HEK293T (cell line): ENCODE measurements at regions of chr4 and their contacts with region 1.

Region 1: GRCh38 chr4:147683717-147684700 is at the start of gene PRMT9:
- DNase-seq: peak; percentile 93

Region 2: GRCh38 chr4:147617173-147617840 is 66.7 kb before region 1 on chr4 and contains the start of gene TMEM184C:
- CTCF ChIA-PET with region 1: interaction called, 3 read pairs
- POLR2A ChIA-PET with region 1: interaction called, 42 read pairs
- DNase-seq: peak; percentile 94

Region 3: DNA sequence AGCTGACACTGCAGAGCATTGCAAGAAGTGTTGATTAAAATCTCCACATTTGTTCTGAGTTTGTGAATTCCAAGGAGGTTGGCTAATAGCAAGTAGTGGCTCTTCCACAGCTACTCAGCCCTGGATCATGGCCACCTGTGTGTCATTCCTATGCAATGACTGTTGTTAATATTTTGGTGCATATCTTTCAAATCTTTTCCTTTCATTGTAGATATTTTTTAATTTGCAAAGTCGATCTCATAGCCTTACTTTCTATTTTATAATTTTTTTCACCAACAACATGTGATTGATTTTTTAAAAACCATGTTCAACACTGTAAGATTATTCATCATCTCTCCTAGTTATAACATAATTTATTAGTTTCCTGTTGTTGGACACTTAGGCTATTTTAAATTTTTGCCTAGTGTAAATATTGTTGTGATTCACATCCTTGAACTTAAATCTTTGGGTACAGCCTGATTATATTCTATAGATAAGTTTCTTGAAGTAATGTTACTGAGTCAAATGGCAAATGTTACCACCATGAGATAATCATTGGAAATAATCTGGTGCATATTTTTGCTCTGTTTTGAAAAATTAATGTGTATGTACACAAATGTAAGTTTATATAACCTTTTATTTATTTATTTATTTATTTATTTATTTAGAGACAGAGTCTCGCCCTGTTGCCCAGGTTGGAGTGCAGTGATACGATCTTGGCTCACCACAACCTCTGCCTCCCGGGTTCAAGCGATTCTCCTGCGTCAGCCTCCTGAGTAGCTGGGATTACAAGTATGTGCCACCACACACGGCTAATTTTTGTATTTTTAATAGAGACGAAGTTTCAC is 30.8 kb after region 1 on chr4:
- CTCF ChIA-PET with region 1: interaction called, 5 read pairs
- POLR2A ChIA-PET with region 1: interaction called, 15 read pairs
- DNase-seq: no peak

Region 4: GRCh38 chr4:147731580-147732517 is 47.8 kb after region 1 on chr4 and contains the start of gene ARHGAP10:
- CTCF ChIA-PET with region 1: no interaction called
- POLR2A ChIA-PET with region 1: interaction called, 28 read pairs
- DNase-seq: peak; percentile 53

Region 5: GRCh38 chr4:147741190-147741785 is 57.3 kb after region 1 on chr4:
- CTCF ChIA-PET with region 1: no interaction called
- POLR2A ChIA-PET with region 1: interaction called, 15 read pairs
- DNase-seq: no peak

Region 6: GRCh38 chr4:147768113-147768512 is 84.1 kb after region 1 on chr4:
- CTCF ChIA-PET with region 1: no interaction called
- POLR2A ChIA-PET with region 1: interaction called, 17 read pairs
- DNase-seq: peak; percentile 54

Region 7: GRCh38 chr4:147813109-147813773 is 129.2 kb after region 1 on chr4:
- CTCF ChIA-PET with region 1: no interaction called
- POLR2A ChIA-PET with region 1: no interaction called
- DNase-seq: no peak